ENCODE measurements at regions of chr9 and their contacts with region 1.

Region 1: GRCh38 chr9:129737479-129738274 is 15.2 kb downstream of the PTGES start:
- DNase-seq: peak; percentile 24
- ATAC-seq: peak; percentile 96
- H3K4me3 ChIP-seq: peak overlapping the region; percentile 79
- H3K27ac ChIP-seq: peak overlapping the region; percentile 17
- H3K4me1 ChIP-seq: peaks cover 6% of the 10 kb centered on the region
- H3K27me3 ChIP-seq: no peaks in the 10 kb centered on the region
- CTCF ChIP-seq: peak; percentile 85 to 96 (median 86)
- EP300 ChIP-seq: no peak
- POLR2A ChIP-seq: peak; percentile 63
- RAD21 ChIP-seq: peak; percentile 69

Region 2: GRCh38 chr9:129696938-129697650 is 40.6 kb before region 1 on chr9:
- CTCF ChIA-PET with region 1: no interaction called
- POLR2A ChIA-PET with region 1: no interaction called
- RAD21 ChIA-PET with region 1: no interaction called
- SMC1A ChIA-PET with region 1: no interaction called
- in situ Hi-C with region 1: no loop called
- intact Hi-C with region 1: no loop called
- DNase-seq: no peak
- ATAC-seq: no peak
- H3K4me3 ChIP-seq: no peak overlapping the region
- H3K27ac ChIP-seq: no peak overlapping the region
- H3K4me1 ChIP-seq: no peaks in the 10 kb centered on the region
- H3K27me3 ChIP-seq: peaks cover 0 to 9% of the 10 kb centered on the region in 2 experiments
- CTCF ChIP-seq: no peak
- EP300 ChIP-seq: no peak
- POLR2A ChIP-seq: no peak
- RAD21 ChIP-seq: no peak

Region 3: DNA sequence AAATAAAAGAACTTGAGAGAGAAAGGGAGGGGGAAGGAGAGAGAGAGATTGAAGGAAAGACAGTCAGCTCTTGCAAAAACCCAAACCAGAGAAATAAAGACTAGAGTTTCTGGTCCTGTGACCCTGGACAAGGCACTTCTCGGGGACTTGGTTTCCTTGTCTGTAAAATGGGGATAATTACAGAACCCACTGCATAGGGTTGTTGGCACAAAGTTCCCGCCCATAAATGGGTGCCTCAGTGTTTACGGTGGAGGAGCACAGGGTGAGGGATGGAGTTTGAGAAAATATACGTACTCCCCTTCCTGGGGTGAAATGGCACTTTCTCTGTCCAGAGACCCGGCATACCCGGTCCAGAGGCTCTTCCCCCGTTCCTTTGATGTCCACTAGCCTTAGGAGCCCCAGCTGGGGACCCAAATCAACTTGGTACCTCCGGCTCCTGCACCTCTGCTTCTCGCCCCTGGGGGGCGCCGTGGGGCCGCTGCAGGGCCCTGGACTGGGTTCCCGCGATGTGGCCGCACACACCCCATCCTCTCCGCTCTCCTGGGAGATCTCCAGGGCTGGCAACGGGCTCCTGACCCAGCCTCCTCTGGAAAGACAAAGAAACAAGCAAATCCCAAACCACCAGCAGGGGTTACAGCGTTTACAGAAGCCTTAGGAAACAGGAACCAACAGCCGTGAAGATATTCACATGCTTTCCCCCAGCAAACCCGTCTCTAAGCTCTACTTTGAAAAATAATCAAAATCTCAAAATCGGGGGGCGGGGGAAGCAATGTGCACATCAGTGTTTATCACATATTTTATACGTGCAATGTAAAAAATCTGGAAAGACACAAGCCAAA is 11.1 kb before region 1 on chr9:
- CTCF ChIA-PET with region 1: interaction called, 45 read pairs
- POLR2A ChIA-PET with region 1: no interaction called
- RAD21 ChIA-PET with region 1: interaction called, 6 read pairs
- SMC1A ChIA-PET with region 1: interaction called, 6 read pairs
- in situ Hi-C with region 1: no loop called
- intact Hi-C with region 1: no loop called
- DNase-seq: no peak
- ATAC-seq: peak; percentile 94
- H3K4me3 ChIP-seq: no peak overlapping the region
- H3K27ac ChIP-seq: no peak overlapping the region
- H3K4me1 ChIP-seq: no peaks in the 10 kb centered on the region
- H3K27me3 ChIP-seq: no peaks in the 10 kb centered on the region; a peak in 1 of 4 replicates
- CTCF ChIP-seq: peak; percentile 80 to 93 (median 85)
- EP300 ChIP-seq: no peak
- POLR2A ChIP-seq: no peak
- RAD21 ChIP-seq: peak; percentile 66

Region 4: DNA sequence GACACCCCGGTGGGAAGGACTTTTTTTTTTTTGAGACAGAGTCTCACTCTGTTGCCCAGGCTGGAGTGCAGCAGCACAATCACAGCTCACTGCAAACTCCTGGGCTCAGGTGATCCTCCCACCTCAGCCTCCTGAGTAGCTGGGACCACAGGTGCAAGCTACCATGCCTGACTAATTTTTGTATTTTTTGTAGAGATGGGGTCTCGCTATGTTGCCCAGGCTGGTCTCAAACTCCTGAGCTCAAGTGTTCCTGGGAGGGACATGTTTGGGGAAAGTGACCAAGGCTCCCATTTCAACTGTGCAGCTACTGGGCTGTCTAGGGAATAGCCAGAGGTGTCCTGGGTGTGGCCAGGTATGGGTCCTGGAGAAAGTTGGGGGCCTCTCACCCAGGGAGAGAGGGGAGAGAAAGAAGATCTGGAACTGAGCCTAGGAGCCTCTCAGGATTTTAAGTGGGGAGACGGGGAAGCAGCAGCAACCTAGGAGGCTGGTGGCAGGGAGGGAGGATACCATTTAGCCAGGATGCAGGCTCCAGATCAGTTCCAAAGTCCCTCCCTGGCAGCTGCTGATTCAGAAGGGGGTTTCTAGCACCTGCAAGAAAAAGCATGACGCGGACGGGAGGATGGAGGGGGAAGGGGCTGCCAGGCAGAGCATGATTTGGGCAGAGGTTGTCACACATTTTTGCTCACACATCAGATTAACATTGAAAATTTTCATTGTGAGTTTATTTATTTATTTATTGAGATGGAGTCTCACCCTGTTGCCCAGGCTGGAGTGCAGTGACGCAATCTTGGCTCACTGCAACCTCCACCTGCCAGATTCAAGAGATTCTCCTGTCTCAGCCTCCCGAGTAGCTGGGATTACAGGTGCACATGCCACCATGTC is 58.6 kb after region 1 on chr9:
- CTCF ChIA-PET with region 1: interaction called, 24 read pairs
- POLR2A ChIA-PET with region 1: no interaction called
- RAD21 ChIA-PET with region 1: no interaction called
- SMC1A ChIA-PET with region 1: no interaction called
- in situ Hi-C with region 1: no loop called
- intact Hi-C with region 1: loop called (anchors 2 kb)
- DNase-seq: no peak
- ATAC-seq: no peak
- H3K4me3 ChIP-seq: no peak overlapping the region
- H3K27ac ChIP-seq: no peak overlapping the region
- H3K4me1 ChIP-seq: no peaks in the 10 kb centered on the region
- H3K27me3 ChIP-seq: peaks cover 0 to 2% of the 10 kb centered on the region in 2 experiments; a peak in 1 of 4 replicates
- CTCF ChIP-seq: no peak
- EP300 ChIP-seq: no peak
- POLR2A ChIP-seq: no peak
- RAD21 ChIP-seq: no peak